ENCODE measurements at regions of chr4 and their contacts with region 1.

Region 1: GRCh38 chr4:36172656-36173055 is 71.7 kb downstream of the ARAP2 start:
- DNase-seq: no peak
- H3K4me3 ChIP-seq: no peak overlapping the region
- H3K27ac ChIP-seq: no peak overlapping the region
- H3K4me1 ChIP-seq: no peaks in the 10 kb centered on the region
- H3K27me3 ChIP-seq: no peaks in the 10 kb centered on the region
- CTCF ChIP-seq: no peak
- POLR2A ChIP-seq: no peak

Region 2: DNA sequence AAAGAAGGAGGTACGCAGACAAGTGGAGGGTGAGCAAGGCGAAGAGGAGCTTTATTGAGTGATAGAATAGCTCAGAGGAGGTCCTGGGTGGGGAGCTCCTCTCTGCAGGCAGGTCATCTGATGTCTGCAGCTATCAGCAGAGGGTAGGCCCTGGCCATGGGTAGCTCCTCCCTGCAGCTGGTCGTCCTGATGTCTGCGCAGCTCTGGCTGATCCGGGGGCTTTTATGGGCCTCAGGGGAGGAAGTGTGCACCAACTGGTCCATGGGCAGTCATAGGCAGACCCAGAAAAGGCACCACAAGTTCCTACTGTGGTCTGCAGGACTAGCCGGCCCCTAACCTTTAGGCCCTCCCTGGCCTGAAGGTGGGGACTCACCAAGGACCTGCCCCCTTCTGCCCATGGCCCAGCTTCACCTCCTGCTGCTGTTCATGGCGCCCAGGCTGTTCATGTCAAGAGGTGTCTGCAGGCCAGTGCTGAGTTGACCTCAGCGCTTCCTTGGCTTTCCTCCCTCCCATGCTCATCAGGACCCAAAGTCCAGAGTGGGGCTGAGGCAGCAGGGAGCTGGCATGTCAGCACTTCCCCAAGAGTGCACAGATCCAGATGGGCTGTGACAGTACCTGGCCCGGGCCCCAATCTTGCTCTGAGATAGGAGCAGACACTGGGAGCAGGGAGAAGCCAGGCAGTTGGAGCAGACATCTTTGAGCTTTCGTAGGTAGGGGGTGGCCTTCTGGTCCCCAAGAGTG is 25.6 kb after region 1 on chr4:
- CTCF ChIA-PET with region 1: no interaction called
- POLR2A ChIA-PET with region 1: no interaction called
- dilution Hi-C with region 1: no loop called
- intact Hi-C with region 1: loop called (anchors 1 kb)
- DNase-seq: no peak
- H3K4me3 ChIP-seq: no peak overlapping the region
- H3K27ac ChIP-seq: no peak overlapping the region
- H3K4me1 ChIP-seq: no peaks in the 10 kb centered on the region
- H3K27me3 ChIP-seq: no peaks in the 10 kb centered on the region
- CTCF ChIP-seq: no peak
- POLR2A ChIP-seq: no peak

Region 3: DNA sequence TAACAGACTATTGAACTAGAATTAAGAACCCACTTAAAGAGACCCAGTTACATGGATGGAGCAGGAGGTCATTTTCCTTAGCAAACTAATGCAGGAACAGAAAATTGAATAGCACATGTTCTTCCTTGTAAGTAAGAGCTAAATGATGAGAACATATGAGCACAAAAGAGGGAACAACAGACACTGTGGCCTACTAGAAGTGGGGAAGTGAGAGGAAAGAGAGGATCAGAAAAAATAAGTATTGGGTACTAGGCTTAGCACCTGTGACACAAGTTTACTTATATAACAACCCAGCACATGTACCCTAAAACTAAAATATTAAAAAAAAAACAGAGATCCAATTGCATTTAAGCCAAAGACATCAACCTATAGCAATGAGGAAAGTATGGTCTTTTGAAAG is 45.5 kb after region 1 on chr4:
- CTCF ChIA-PET with region 1: no interaction called
- POLR2A ChIA-PET with region 1: no interaction called
- dilution Hi-C with region 1: no loop called
- intact Hi-C with region 1: no loop called
- DNase-seq: no peak
- H3K4me3 ChIP-seq: no peak overlapping the region
- H3K27ac ChIP-seq: no peak overlapping the region
- H3K4me1 ChIP-seq: no peaks in the 10 kb centered on the region
- H3K27me3 ChIP-seq: no peaks in the 10 kb centered on the region
- CTCF ChIP-seq: no peak
- POLR2A ChIP-seq: no peak

Measured in endothelial cell of umbilical vein (primary cell).